ENCODE measurements at regions of chr7 and their contacts with region 1.

Region 1: GRCh38 chr7:131071786-131072504 is 255.7 kb upstream of the MKLN1 start:
- DNase-seq: peak; percentile 72
- ATAC-seq: peak; percentile 57
- H3K4me3 ChIP-seq: peak overlapping the region; percentile 56
- H3K27ac ChIP-seq: peak overlapping the region; percentile 25; the same call in 1 of the 2 replicates
- H3K4me1 ChIP-seq: peaks cover 23% of the 10 kb centered on the region
- H3K27me3 ChIP-seq: no peaks in the 10 kb centered on the region
- CTCF ChIP-seq: peak; percentile 55

Region 2: GRCh38 chr7:130793855-130794618 is 277.9 kb before region 1 on chr7:
- CTCF ChIA-PET with region 1: no interaction called
- POLR2A ChIA-PET with region 1: no interaction called
- intact Hi-C with region 1: no loop called
- DNase-seq: no peak
- ATAC-seq: no peak
- H3K4me3 ChIP-seq: no peak overlapping the region
- H3K27ac ChIP-seq: no peak overlapping the region
- H3K4me1 ChIP-seq: no peaks in the 10 kb centered on the region
- H3K27me3 ChIP-seq: no peaks in the 10 kb centered on the region
- CTCF ChIP-seq: no peak

Region 3: GRCh38 chr7:131157530-131158243 is 85.7 kb after region 1 on chr7:
- CTCF ChIA-PET with region 1: no interaction called
- POLR2A ChIA-PET with region 1: no interaction called
- intact Hi-C with region 1: no loop called
- DNase-seq: no peak
- ATAC-seq: peak; percentile 45; the same call in 1 of the 2 replicates
- H3K4me3 ChIP-seq: no peak overlapping the region
- H3K27ac ChIP-seq: no peak overlapping the region
- H3K4me1 ChIP-seq: peaks cover 13% of the 10 kb centered on the region
- H3K27me3 ChIP-seq: no peaks in the 10 kb centered on the region
- CTCF ChIP-seq: no peak

Region 4: DNA sequence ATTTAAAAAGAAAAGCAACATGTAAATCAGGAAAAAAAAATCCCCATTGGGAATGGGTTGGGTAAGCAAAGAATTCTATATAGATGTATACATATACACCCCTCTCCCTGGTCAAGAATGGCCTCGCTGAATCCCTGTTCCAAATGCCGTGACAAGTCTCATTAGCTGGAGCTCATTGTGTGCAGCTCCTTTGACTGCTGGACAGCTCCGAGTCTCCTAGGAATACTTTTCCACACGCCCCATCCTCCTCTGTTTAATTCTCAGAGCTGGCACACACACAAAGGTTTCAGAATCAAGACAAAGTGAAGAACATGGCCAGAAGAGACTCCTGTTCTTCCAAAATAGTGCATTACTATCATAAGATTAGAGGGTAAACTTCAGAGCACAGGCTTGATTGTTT is 124.9 kb after region 1 on chr7:
- CTCF ChIA-PET with region 1: interaction called, 3 read pairs
- POLR2A ChIA-PET with region 1: no interaction called
- intact Hi-C with region 1: loop called (anchors 5 kb)
- DNase-seq: no peak
- ATAC-seq: no peak
- H3K4me3 ChIP-seq: no peak overlapping the region
- H3K27ac ChIP-seq: no peak overlapping the region
- H3K4me1 ChIP-seq: peaks cover 29% of the 10 kb centered on the region
- H3K27me3 ChIP-seq: no peaks in the 10 kb centered on the region
- CTCF ChIP-seq: no peak

Region 5: GRCh38 chr7:131302876-131303707 is 231.1 kb after region 1 on chr7:
- CTCF ChIA-PET with region 1: interaction called, 5 read pairs
- POLR2A ChIA-PET with region 1: no interaction called
- intact Hi-C with region 1: loop called (anchors 1 kb)
- DNase-seq: peak; percentile 65
- ATAC-seq: peak; percentile 88
- H3K4me3 ChIP-seq: no peak overlapping the region
- H3K27ac ChIP-seq: no peak overlapping the region
- H3K4me1 ChIP-seq: no peaks in the 10 kb centered on the region
- H3K27me3 ChIP-seq: no peaks in the 10 kb centered on the region
- CTCF ChIP-seq: peak; percentile 84

Region 6: GRCh38 chr7:131327626-131328376 is 255.9 kb after region 1 on chr7 and contains the start of gene MKLN1:
- CTCF ChIA-PET with region 1: no interaction called
- POLR2A ChIA-PET with region 1: interaction called, 25 read pairs
- intact Hi-C with region 1: no loop called
- DNase-seq: peak; percentile 85
- ATAC-seq: peak; percentile 88
- H3K4me3 ChIP-seq: peak within 1 kb of the TSS; percentile 88
- H3K27ac ChIP-seq: peak within 1 kb of the TSS; percentile 66
- H3K4me1 ChIP-seq: peaks cover 30% of the 10 kb centered on the region
- H3K27me3 ChIP-seq: no peaks in the 10 kb centered on the region
- CTCF ChIP-seq: no peak
- total RNA-seq, gene MKLN1: 15.3 and 16.3 TPM in 2 replicates

Region 7: GRCh38 chr7:131424219-131424822 is 352.4 kb after region 1 on chr7:
- CTCF ChIA-PET with region 1: no interaction called
- POLR2A ChIA-PET with region 1: no interaction called
- intact Hi-C with region 1: loop called (anchors 1 kb)
- DNase-seq: peak; percentile 57
- ATAC-seq: peak; percentile 96
- H3K4me3 ChIP-seq: no peak overlapping the region
- H3K27ac ChIP-seq: no peak overlapping the region
- H3K4me1 ChIP-seq: no peaks in the 10 kb centered on the region
- H3K27me3 ChIP-seq: no peaks in the 10 kb centered on the region
- CTCF ChIP-seq: peak; percentile 78

Region 8: GRCh38 chr7:131488361-131488760 is 416.4 kb after region 1 on chr7:
- CTCF ChIA-PET with region 1: interaction called, 12 read pairs
- POLR2A ChIA-PET with region 1: no interaction called
- intact Hi-C with region 1: no loop called
- DNase-seq: peak; percentile 46
- ATAC-seq: peak; percentile 46; the same call in 1 of the 2 replicates
- H3K4me3 ChIP-seq: no peak overlapping the region
- H3K27ac ChIP-seq: no peak overlapping the region
- H3K4me1 ChIP-seq: peaks cover 4% of the 10 kb centered on the region; the same call in 1 of the 2 replicates
- H3K27me3 ChIP-seq: no peaks in the 10 kb centered on the region
- CTCF ChIP-seq: peak; percentile 43

Region 9: DNA sequence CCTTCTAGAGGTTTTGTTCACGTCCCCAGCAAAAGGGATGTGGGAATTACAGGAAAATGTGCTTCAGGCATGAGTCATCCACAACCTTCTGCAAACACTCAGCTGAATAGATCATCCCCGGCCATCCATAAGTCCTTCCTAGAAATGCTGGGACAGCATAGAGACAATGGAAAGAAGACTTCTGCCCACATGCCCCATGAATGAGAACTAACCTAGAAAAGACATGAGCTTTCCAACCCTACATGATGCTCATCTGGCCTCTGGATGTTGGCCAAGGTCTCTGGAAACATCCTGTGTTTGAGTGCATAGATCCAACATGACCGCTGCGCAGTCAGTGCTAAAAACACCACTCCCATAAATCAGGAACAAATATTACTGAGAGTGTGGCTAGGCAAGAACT is 1226.8 kb after region 1 on chr7:
- CTCF ChIA-PET with region 1: no interaction called
- POLR2A ChIA-PET with region 1: no interaction called
- intact Hi-C with region 1: no loop called
- DNase-seq: peak; percentile 55
- ATAC-seq: peak; percentile 91
- H3K4me3 ChIP-seq: no peak overlapping the region
- H3K27ac ChIP-seq: no peak overlapping the region
- H3K4me1 ChIP-seq: peaks cover 9% of the 10 kb centered on the region; the same call in 1 of the 2 replicates
- H3K27me3 ChIP-seq: no peaks in the 10 kb centered on the region
- CTCF ChIP-seq: no peak